ENCODE measurements at regions of chr9 and their contacts with region 1.

Region 1: GRCh38 chr9:34178520-34179212 is at the start of gene UBAP1:
- DNase-seq: peak; percentile 94
- ATAC-seq: peak; percentile 96
- H3K4me3 ChIP-seq: peak within 1 kb of the TSS; percentile 99
- H3K27ac ChIP-seq: peak within 1 kb of the TSS; percentile 73
- H3K4me1 ChIP-seq: peaks cover 8% of the 10 kb centered on the region; the same call in 1 of the 2 replicates
- H3K27me3 ChIP-seq: no peaks in the 10 kb centered on the region
- CTCF ChIP-seq: no peak
- total RNA-seq, gene UBAP1: 15.2 and 16.5 TPM in 2 replicates

Region 2: DNA sequence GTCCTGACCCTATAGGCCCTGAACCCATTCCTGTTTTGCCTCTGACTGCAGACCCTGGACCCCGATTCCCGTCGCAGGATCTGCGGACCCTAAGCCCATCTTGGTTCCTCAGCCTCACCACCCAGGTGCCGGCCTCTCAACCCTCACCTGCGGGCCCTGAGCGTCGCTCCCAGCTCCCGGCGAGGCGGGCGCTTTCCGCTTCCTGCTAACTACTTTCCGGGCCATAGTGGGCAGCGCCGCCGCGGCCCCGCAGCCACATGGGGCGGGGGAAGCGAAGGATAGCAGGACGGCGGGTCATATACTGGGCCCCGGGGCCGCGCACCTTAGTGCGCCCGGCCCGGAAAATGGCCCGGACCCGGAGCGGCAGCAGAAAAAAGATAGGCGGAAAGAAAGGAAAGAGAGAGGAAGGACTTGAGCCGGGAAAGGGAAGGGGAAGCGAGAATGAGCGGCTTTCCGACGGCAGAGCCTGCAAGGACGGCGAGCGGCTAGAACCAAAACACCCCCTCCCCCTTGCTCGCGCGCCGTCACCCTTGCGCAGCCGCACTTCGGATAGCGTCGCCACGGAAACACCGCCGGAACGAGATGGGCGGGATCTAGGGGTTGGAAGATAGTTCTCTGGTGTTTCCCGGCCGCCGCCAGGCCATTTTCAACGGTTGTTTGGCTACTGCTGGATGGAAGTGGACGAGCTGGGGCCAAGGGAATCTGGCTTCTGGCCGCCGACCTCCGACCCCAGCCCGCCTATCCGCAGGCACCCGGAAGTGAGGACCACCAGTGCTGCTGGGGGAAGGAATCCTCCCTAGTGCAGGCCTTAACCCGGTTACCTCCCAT is 52.2 kb before region 1 on chr9 and contains the start of gene DCAF12:
- CTCF ChIA-PET with region 1: no interaction called
- POLR2A ChIA-PET with region 1: no interaction called
- intact Hi-C with region 1: loop called (anchors 5 kb)
- DNase-seq: peak; percentile 86
- ATAC-seq: peak; percentile 86
- H3K4me3 ChIP-seq: peak within 1 kb of the TSS; percentile 78
- H3K27ac ChIP-seq: peak within 1 kb of the TSS; percentile 64
- H3K4me1 ChIP-seq: peaks cover 14% of the 10 kb centered on the region
- H3K27me3 ChIP-seq: no peaks in the 10 kb centered on the region
- CTCF ChIP-seq: no peak
- total RNA-seq, gene DCAF12: 12.9 and 16.1 TPM in 2 replicates

Region 3: DNA sequence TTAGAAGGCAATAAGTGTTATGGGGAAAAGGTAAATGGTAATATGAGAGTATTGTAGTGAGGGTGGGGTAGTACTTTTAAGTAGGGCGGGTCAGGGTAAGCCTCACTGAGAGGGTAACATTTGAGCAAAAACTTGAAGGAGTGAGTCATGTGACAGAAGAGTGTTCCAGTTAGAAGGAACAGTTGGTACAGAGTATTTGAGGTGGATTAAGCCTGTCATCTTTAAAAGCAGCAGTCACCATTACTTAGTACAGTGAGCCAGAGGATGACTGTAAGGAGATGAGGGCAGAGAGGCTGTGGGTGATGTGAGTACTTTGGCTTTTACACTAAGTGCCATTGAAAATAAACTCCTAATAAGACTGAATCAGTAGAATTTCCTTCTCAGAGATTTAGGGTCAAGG is 55.0 kb after region 1 on chr9:
- CTCF ChIA-PET with region 1: no interaction called
- POLR2A ChIA-PET with region 1: no interaction called
- intact Hi-C with region 1: no loop called
- DNase-seq: no peak
- ATAC-seq: peak; percentile 50
- H3K4me3 ChIP-seq: no peak overlapping the region
- H3K27ac ChIP-seq: no peak overlapping the region
- H3K4me1 ChIP-seq: no peaks in the 10 kb centered on the region
- H3K27me3 ChIP-seq: no peaks in the 10 kb centered on the region
- CTCF ChIP-seq: no peak

Region 4: DNA sequence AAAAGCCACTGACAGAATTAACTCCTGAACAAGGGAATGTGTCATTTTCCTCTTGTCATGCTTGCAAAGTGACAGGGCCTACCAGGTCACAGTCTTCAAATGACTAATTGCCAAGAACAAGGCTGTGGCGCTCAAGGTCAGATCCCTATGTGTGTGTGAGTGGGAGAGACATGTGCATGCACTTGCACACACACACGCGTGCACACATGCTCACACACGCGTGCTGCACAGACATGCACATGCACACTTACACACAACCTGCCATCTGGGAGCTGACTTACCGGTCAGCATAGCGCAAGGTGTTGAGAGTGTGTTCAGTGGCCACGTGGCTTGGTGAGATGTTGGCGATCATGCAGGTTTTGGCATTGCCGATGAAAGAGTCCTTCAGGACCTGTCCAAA is 80.6 kb after region 1 on chr9:
- CTCF ChIA-PET with region 1: no interaction called
- POLR2A ChIA-PET with region 1: no interaction called
- intact Hi-C with region 1: no loop called
- DNase-seq: no peak
- ATAC-seq: no peak
- H3K4me3 ChIP-seq: no peak overlapping the region
- H3K27ac ChIP-seq: no peak overlapping the region
- H3K4me1 ChIP-seq: peaks cover 21% of the 10 kb centered on the region
- H3K27me3 ChIP-seq: no peaks in the 10 kb centered on the region
- CTCF ChIP-seq: no peak

Region 5: GRCh38 chr9:34536685-34537084 is 358.0 kb after region 1 on chr9:
- CTCF ChIA-PET with region 1: no interaction called
- POLR2A ChIA-PET with region 1: no interaction called
- intact Hi-C with region 1: no loop called
- DNase-seq: no peak
- ATAC-seq: no peak
- H3K4me3 ChIP-seq: no peak overlapping the region
- H3K27ac ChIP-seq: no peak overlapping the region
- H3K4me1 ChIP-seq: peaks cover 6% of the 10 kb centered on the region; the same call in 1 of the 2 replicates
- H3K27me3 ChIP-seq: peaks cover 32% of the 10 kb centered on the region
- CTCF ChIP-seq: no peak

Measured in PC-3 (cell line).